ENCODE measurements at regions of chr9 and their contacts with region 1.

Region 1: GRCh38 chr9:16161483-16161882 is 608.6 kb downstream of the CCDC171 start:
- DNase-seq: no peak
- H3K4me3 ChIP-seq: no peak overlapping the region
- H3K27ac ChIP-seq: no peak overlapping the region
- H3K4me1 ChIP-seq: no peaks in the 10 kb centered on the region
- H3K27me3 ChIP-seq: no peaks in the 10 kb centered on the region
- CTCF ChIP-seq: no peak
- EP300 ChIP-seq: no peak
- POLR2A ChIP-seq: no peak

Region 2: DNA sequence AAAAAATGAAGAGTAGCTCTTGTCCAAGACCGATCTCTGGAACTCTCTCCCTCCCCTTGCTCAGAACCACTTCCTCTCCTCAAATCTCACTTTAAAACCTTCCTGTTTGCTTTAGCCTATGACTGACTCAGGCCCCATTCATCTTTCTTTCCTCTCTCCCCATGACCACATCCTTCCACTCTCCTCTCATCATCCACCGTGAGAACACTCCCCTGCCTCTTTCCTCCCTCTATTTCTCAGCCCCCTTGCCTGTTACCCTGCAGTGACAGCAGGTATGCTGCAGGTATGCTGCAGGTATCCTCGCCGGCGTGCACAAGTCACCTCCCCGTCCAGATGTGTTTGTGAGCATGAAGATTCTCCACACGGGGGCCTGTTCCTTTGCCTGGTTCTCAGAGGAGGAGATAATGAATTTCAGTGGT is 103.3 kb before region 1 on chr9:
- in situ Hi-C with region 1: no loop called
- intact Hi-C with region 1: no loop called
- DNase-seq: no peak
- H3K4me3 ChIP-seq: no peak overlapping the region
- H3K27ac ChIP-seq: no peak overlapping the region
- H3K4me1 ChIP-seq: no peaks in the 10 kb centered on the region
- H3K27me3 ChIP-seq: no peaks in the 10 kb centered on the region
- CTCF ChIP-seq: no peak
- EP300 ChIP-seq: no peak
- POLR2A ChIP-seq: no peak

Region 3: DNA sequence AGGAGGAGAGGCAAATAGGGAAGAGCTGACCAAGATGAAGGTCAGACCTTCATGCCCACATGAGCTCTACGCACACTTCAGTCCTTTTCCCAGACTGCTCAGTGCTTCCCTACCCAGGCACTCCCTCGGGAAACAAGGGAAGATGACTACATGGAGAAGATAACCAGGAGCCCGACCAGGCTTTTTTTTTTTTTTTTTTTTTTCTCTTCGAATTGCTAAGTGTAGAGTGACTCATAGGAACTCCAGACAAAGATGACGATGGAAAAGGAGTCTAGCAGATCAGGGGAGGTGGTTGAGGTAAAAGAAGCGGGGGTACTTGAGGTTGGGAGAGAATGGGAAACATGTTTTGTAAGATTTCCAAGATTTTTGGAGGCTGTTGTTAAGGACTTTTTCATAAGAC is 182.9 kb after region 1 on chr9:
- in situ Hi-C with region 1: no loop called
- intact Hi-C with region 1: no loop called
- DNase-seq: no peak
- H3K4me3 ChIP-seq: no peak overlapping the region
- H3K27ac ChIP-seq: no peak overlapping the region
- H3K4me1 ChIP-seq: peaks cover 0 to 9% (median 0%) of the 10 kb centered on the region in 4 donors
- H3K27me3 ChIP-seq: no peaks in the 10 kb centered on the region
- CTCF ChIP-seq: no peak
- EP300 ChIP-seq: no peak
- POLR2A ChIP-seq: no peak

Region 4: DNA sequence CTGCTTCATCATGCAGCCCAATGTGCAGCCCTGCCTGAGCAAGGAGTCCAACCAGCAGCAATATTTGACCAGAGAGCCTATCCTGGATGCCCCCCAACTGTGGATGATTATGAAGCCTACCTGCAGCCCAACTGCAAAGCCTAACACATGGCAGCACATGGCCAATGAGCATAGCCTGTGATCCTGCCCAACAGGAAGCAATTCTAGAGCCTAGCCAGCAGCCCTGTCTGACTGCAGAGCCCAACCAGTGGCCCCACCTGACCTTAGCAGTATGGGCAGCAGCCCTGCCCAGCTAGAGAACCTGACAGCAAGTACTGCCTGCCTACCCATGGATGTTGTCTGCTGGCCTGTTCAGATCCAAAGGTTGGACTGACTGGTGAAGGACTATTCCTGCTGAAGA is 1320.1 kb after region 1 on chr9:
- in situ Hi-C with region 1: no loop called
- intact Hi-C with region 1: loop called (anchors 10 kb)
- DNase-seq: no peak
- H3K4me3 ChIP-seq: no peak overlapping the region
- H3K27ac ChIP-seq: no peak overlapping the region
- H3K4me1 ChIP-seq: no peaks in the 10 kb centered on the region
- H3K27me3 ChIP-seq: no peaks in the 10 kb centered on the region
- CTCF ChIP-seq: no peak
- EP300 ChIP-seq: no peak
- POLR2A ChIP-seq: no peak